Caco-2 (cell line): ENCODE measurements at regions of chr1 and their contacts with region 1.

Region 1: DNA sequence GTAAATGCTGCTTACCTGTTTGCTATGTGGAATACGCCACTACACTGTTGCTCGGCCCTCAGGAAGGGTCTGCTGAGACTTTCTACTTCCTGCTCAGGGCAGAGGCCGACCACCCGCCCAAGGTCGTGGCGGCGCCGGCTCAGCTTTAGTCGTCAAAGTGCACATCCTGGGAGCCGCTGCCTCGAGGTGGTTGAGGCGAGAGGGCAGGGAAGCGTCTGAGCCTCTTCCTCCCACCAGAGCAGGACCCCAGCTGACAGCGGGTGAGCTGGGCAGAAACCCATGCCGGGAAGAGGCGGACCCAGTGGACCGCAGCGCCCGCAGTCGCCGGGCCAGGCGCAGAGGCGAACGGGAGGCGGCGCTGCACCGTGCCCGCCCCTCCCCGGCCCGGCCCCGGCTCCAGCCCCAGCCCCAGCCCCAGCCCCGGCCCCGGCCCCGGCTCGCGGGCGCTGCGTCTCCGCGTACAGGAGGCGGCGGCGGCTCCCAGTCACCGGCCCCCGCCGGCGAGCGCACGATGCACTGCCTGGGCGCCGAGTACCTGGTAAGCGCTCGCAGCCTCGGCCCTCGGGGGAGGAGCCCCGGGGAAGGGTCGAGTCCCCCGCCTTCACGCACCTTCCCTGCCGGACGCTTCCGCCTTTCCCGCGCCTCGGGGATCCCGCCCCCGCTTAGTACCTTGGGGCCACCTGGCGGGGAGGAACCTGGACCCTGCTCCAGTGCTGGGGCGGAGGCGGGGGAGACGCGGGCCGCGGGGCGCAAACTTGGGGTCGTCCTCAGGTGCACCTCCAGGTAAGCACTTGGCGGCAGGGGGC is at the start of gene SLC44A3:
- DNase-seq: peak; percentile 70 to 78
- H3K4me3 ChIP-seq: peak within 1 kb of the TSS; percentile 81
- H3K4me3 Mint-ChIP-seq: peak within 1 kb of the TSS; percentile 78
- H3K27ac Mint-ChIP-seq: peak within 1 kb of the TSS; percentile 85
- H3K4me1 ChIP-seq: peaks cover 13% of the 10 kb centered on the region
- H3K4me1 Mint-ChIP-seq: peaks cover 5% of the 10 kb centered on the region
- H3K27me3 ChIP-seq: no peaks in the 10 kb centered on the region
- H3K27me3 Mint-ChIP-seq: no peaks in the 10 kb centered on the region
- CTCF ChIP-seq: no peak
- total RNA-seq, gene SLC44A3: 16.9 and 23.7 TPM in 2 replicates

Region 2: GRCh38 chr1:94702442-94702815 is 117.7 kb before region 1 on chr1:
- CTCF ChIA-PET with region 1: no interaction called
- POLR2A ChIA-PET with region 1: no interaction called
- intact Hi-C with region 1: no loop called
- DNase-seq: no peak
- H3K4me3 ChIP-seq: no peak overlapping the region
- H3K4me3 Mint-ChIP-seq: no peak overlapping the region
- H3K27ac Mint-ChIP-seq: no peak overlapping the region
- H3K4me1 ChIP-seq: peaks cover 24% of the 10 kb centered on the region
- H3K4me1 Mint-ChIP-seq: peaks cover 17% of the 10 kb centered on the region
- H3K27me3 ChIP-seq: no peaks in the 10 kb centered on the region
- H3K27me3 Mint-ChIP-seq: no peaks in the 10 kb centered on the region
- CTCF ChIP-seq: no peak

Region 3: GRCh38 chr1:94765958-94766357 is 54.2 kb before region 1 on chr1:
- CTCF ChIA-PET with region 1: no interaction called
- POLR2A ChIA-PET with region 1: no interaction called
- intact Hi-C with region 1: no loop called
- DNase-seq: no peak
- H3K4me3 ChIP-seq: no peak overlapping the region
- H3K4me3 Mint-ChIP-seq: no peak overlapping the region
- H3K27ac Mint-ChIP-seq: no peak overlapping the region
- H3K4me1 ChIP-seq: no peaks in the 10 kb centered on the region
- H3K4me1 Mint-ChIP-seq: no peaks in the 10 kb centered on the region
- H3K27me3 ChIP-seq: no peaks in the 10 kb centered on the region
- H3K27me3 Mint-ChIP-seq: no peaks in the 10 kb centered on the region
- CTCF ChIP-seq: no peak

Region 4: DNA sequence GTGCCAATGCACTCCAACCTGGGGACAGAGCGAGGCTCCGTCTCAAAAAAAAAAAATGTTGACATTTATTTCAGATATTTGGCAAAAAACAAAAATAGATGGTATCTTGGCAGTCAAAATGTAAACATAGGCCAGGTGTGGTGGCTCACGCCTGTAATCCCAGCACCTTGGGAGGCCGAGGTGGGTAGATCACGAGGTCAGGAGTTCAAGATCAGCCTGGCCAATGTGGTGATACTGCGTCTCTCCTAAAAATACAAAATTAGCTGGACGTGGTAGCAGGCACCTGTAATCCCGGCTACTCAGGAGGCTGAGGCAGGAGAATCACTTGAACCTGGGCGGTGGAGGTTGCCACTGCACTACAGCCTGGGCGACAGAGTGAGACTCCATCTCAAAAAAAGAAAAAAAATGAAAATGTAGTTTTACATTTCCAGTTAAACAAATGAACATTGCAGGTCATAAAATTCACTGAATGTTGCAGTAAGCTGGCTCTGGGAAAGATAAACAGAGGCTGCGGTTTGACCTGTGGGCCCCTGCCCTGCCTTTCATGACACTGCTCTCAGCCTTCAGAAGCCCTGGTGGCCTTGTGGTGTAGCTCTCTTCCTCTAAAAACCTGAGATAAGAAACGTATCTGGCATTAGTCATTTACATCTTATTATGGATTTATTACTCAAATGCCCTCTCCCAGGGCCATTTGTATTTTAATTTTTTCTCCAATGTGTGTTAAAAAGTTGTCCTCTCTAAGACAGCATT is 12.2 kb before region 1 on chr1:
- CTCF ChIA-PET with region 1: no interaction called
- POLR2A ChIA-PET with region 1: no interaction called
- intact Hi-C with region 1: loop called (anchors 1 kb)
- DNase-seq: peak; percentile 54 to 74
- H3K4me3 ChIP-seq: no peak overlapping the region
- H3K4me3 Mint-ChIP-seq: no peak overlapping the region
- H3K27ac Mint-ChIP-seq: no peak overlapping the region
- H3K4me1 ChIP-seq: peaks cover 19% of the 10 kb centered on the region; the same call in 1 of the 2 replicates
- H3K4me1 Mint-ChIP-seq: peaks cover 21% of the 10 kb centered on the region
- H3K27me3 ChIP-seq: no peaks in the 10 kb centered on the region
- H3K27me3 Mint-ChIP-seq: no peaks in the 10 kb centered on the region
- CTCF ChIP-seq: peak in 1 of 2 experiments; percentile 11